ENCODE measurements at regions of chr21 and their contacts with region 1.

Region 1: DNA sequence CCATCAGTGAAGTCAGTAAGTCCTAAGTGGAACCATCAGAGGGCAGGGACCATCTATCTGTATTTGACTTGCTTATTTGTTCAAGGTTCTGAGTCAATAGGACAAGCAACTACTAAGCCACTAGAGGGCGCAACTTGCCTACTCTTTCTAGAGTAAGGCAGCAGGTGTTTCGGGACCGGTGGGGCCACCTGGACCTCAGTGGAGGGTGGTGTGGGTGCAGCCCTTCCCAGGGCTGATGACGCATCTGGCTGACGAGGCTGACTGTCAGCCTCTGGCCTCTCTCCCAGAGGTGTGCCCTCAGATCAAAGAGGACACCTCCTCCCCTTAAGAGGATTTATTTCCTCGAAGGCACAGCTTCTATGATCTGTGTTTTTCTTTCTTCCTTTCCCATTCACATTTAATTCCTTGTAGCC is 6.6 kb downstream of the CBR3 start:
- DNase-seq: peak; percentile 97
- H3K4me3 ChIP-seq: no peak overlapping the region
- H3K27ac ChIP-seq: peak overlapping the region; percentile 76
- H3K4me1 ChIP-seq: peaks cover 5% of the 10 kb centered on the region
- H3K27me3 ChIP-seq: no peaks in the 10 kb centered on the region
- CTCF ChIP-seq: peak; percentile 73 to 83

Region 2: DNA sequence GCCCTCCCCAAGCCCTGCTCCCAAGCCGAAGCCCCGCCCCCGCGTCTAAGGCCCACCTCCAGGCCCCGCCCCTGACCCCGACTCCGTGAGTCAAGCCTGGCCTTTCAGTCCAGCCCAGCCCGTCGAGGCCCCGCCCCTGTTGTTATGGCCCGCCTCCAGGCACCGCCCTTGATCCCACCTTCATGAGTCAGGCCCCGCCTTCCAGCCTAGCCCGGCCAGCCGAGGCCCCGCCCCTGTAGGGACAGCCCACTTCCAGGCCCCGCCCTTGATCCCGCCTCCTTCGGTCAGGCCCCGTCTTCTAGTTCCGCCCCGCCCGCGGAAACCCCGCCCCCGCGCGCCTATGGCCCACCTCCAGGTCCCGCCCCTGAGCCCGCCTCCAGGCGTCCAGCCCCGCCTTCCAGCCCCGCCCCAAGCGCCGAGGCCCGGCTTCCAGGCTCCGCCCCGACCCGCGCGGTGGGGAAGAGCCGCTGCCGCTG is 14.9 kb after region 1 on chr21:
- CTCF ChIA-PET with region 1: no interaction called
- dilution Hi-C with region 1: no loop called
- in situ Hi-C with region 1: no loop called
- intact Hi-C with region 1: loop called (anchors 1 kb)
- DNase-seq: peak; percentile 97
- H3K4me3 ChIP-seq: peak overlapping the region; percentile 55 to 94 (median 78)
- H3K27ac ChIP-seq: peak overlapping the region; percentile 58
- H3K4me1 ChIP-seq: peaks cover 13% of the 10 kb centered on the region
- H3K27me3 ChIP-seq: no peaks in the 10 kb centered on the region
- CTCF ChIP-seq: no peak

Region 3: GRCh38 chr21:36330904-36331303 is 189.4 kb after region 1 on chr21:
- CTCF ChIA-PET with region 1: no interaction called
- dilution Hi-C with region 1: no loop called
- in situ Hi-C with region 1: loop called (anchors 5 kb)
- intact Hi-C with region 1: loop called (anchors 1 kb)
- DNase-seq: peak; percentile 36
- H3K4me3 ChIP-seq: no peak overlapping the region
- H3K27ac ChIP-seq: no peak overlapping the region
- H3K4me1 ChIP-seq: peaks cover 4% of the 10 kb centered on the region
- H3K27me3 ChIP-seq: no peaks in the 10 kb centered on the region
- CTCF ChIP-seq: peak; percentile 74 to 85

Region 4: DNA sequence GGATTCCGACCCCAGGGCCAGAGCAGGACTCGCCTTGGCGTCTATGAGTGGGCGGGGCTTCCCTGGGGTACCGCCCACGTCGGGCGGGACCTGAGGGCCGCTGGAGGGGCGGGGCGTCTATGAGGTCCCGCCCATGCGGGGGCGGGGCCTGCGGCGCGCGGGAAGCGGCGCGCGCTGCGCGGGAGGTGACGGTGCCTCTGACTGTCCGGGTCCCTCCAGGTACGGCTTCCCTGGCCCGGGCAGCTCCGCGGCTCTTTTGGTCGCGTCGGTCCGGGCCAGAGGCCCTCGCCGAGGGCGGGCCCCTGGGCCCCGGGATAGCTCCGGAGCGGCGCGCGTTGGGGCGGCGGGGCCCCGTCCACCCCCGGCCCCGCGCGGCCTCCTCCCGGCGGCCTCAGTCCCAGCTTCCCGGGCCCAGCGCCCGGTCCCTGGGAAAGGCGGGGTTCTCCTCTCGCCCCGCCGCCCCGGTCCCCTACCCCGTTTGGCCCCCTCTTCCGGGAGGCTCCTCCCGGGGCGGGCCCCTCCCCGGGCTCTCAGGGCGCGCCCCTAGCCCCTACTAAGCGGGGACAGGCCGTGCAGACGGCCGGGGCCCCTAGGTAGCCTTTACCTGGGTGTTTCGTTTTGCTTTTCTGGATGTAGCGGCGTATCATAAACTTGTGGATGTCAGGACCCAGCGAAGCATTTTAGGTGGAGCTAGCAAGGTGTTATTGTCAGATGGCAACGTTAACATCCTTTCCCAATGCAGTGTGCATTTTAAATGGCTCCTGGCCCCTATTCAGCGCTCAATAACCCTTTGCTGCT is 243.9 kb after region 1 on chr21 and contains the start of gene CHAF1B:
- CTCF ChIA-PET with region 1: no interaction called
- dilution Hi-C with region 1: no loop called
- in situ Hi-C with region 1: no loop called
- intact Hi-C with region 1: loop called (anchors 1 kb)
- DNase-seq: peak; percentile 75
- H3K4me3 ChIP-seq: peak within 1 kb of the TSS; percentile 60 to 68 (median 61)
- H3K27ac ChIP-seq: peak within 1 kb of the TSS; percentile 60
- H3K4me1 ChIP-seq: peaks cover 4% of the 10 kb centered on the region
- H3K27me3 ChIP-seq: no peaks in the 10 kb centered on the region
- CTCF ChIP-seq: no peak
- total RNA-seq, gene CHAF1B: 2.3 to 12.3 TPM

Region 5: DNA sequence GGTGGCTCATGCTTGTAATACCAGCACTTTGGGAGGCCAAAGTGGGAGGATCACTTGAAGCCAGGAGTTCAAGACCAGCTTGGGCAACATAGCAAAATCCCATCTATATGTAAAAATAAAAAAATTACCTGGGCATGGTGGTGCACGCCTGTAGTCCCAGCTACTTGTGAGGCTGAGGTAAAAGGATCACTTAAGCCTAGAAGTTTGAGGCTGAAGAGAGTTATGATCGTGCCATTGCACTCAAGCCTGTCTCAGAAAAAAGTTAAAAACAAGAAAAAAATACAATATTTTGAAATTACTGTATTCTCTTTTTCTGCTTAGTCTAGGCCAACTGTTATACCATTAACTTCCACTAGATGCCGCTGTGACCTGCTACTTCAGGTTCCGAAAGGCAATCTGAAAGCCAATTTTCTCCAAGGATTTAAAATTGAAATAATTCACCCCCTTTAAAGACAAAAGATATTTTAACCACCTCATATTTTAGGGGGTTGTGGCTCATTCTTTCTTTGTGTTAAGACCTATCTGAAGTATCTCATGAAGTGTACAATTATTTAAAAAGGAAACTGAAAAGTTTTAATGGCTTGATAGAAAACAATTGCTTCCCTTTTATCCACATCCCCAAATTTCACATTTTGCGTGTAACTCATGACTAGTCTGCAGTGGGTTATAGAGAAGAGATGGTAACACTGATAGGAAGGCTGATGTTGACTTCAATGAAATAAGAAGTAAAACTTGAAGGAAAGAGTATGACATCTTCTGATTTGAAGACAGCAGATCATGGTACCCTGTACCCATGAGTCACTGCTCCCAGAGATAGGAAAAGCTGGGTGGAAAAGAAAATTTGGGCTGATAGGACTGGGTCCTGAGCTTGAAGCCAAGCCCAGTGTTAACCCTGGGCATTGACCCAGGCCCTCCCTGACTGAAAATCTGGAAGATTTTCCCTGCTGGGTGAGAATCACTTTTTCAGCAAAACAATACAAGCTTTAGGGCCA is 362.8 kb after region 1 on chr21:
- CTCF ChIA-PET with region 1: no interaction called
- dilution Hi-C with region 1: loop called (anchors 25 kb)
- in situ Hi-C with region 1: no loop called
- intact Hi-C with region 1: no loop called
- DNase-seq: peak; percentile 11
- H3K4me3 ChIP-seq: no peak overlapping the region
- H3K27ac ChIP-seq: no peak overlapping the region
- H3K4me1 ChIP-seq: peaks cover 9% of the 10 kb centered on the region
- H3K27me3 ChIP-seq: no peaks in the 10 kb centered on the region
- CTCF ChIP-seq: peak; percentile 78 to 86

Region 6: GRCh38 chr21:36917471-36918158 is 776.1 kb after region 1 on chr21:
- CTCF ChIA-PET with region 1: no interaction called
- dilution Hi-C with region 1: no loop called
- in situ Hi-C with region 1: no loop called
- intact Hi-C with region 1: loop called (anchors 1 kb)
- DNase-seq: no peak
- H3K4me3 ChIP-seq: no peak overlapping the region
- H3K27ac ChIP-seq: no peak overlapping the region
- H3K4me1 ChIP-seq: no peaks in the 10 kb centered on the region
- H3K27me3 ChIP-seq: no peaks in the 10 kb centered on the region
- CTCF ChIP-seq: peak; percentile 41 to 71